Astrocyte of the cerebellum (primary cell): ENCODE measurements at regions of chr4 and their contacts with region 1.

Region 1: DNA sequence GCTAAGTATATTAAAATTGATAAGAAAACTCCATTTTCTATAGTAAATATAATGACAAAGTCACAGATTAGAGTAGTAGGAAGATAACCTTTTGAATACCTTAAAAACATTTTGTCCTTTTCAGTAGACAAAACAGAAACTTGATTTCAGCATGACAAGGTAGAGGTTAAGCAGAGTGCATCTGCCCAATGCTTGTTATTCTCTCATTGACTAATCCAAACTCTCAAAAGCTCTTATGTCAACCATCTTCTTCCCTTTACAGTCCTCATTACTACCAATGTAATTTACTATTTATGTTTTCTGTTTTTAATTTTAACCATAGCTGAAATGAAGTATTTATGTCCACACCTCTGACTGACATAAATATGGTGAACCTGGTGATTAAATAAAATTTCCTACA is 11.1 kb downstream of the NIPAL1 start:
- DNase-seq: no peak
- H3K4me3 ChIP-seq: no peak overlapping the region
- CTCF ChIP-seq: no peak

Region 2: GRCh38 chr4:48121128-48121527 is 93.5 kb after region 1 on chr4:
- in situ Hi-C with region 1: loop called (anchors 5 kb)
- DNase-seq: no peak
- H3K4me3 ChIP-seq: no peak overlapping the region
- CTCF ChIP-seq: no peak